CD4-positive, alpha-beta T cell (primary cell): ENCODE measurements at regions of chr1 and their contacts with region 1.

Region 1: DNA sequence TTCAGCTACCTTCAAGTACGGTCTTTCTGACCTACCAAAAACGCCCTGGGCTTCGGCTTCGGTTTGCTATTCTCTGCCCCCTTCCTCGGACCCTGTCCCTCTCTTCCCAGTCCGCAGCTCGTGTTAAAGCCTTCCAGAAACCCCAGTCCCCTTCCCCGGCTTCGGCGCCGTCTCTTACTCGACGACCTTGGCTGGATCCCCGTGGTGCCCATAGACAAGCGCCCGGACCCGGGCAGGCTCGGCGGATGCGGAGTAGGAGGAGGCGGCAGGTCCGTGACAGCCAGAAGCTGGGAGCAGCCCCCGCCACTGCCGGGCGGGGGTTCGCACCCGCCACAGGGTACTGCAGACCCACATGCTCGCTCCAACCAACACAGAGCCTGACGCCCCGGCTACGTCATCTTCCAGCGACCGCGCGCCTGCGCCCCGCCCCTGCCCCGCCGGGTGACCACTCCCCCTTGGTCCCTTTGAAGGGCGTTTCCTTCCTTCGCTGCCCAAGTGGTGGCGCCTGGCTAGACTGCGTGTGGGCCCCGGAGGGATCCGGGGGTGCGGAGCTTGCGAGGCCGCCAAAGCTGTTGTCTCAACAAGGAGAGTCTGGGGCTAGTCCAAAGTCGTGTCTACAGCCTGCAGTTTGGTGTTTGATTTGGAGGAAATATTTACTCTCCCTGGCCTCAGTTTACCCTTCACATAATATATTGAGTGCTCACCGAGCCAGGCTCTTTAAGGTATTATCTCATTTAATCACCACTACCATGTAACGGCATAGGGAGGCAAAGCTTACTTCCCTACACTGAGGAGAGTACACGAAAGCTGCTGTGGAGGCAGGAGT is at the start of gene MECR:
- DNase-seq: peak; percentile 88 to 97 (median 92)
- ATAC-seq: peak; percentile 94
- H3K4me3 ChIP-seq: peak within 1 kb of the TSS; percentile 96
- H3K4me3 Mint-ChIP-seq: peak within 1 kb of the TSS; percentile 94
- H3K27ac ChIP-seq: peak within 1 kb of the TSS; percentile 10 to 67
- H3K27ac Mint-ChIP-seq: peak within 1 kb of the TSS; percentile 92
- H3K4me1 ChIP-seq: peaks cover 17% of the 10 kb centered on the region
- H3K4me1 Mint-ChIP-seq: peaks cover 24% of the 10 kb centered on the region
- H3K27me3 ChIP-seq: peaks cover 0 to 6% of the 10 kb centered on the region in 2 experiments
- H3K27me3 Mint-ChIP-seq: peaks cover 13% of the 10 kb centered on the region
- CTCF ChIP-seq: no peak
- total RNA-seq, gene MECR: 5.5 to 6.6 TPM

Region 2: DNA sequence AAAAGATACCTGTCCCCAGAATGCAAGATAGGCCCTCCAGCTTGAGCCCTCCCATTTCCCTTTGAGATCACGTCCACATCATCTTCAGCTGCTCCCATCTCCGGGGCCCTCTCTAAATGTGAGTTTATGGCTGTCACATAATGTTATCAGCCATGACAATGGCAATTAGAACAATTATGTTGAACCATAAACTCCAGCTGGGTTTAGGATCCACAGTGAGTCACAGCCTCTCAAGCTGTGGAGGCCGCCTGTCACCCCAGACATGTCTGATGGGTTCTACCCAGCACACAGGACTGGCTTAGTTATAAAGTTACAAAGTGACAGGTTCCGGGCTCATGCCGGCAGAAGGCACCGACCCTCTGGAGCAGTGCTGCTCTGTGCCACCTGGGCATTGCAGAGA is 602.8 kb after region 1 on chr1:
- CTCF ChIA-PET with region 1: no interaction called
- POLR2A ChIA-PET with region 1: no interaction called
- intact Hi-C with region 1: no loop called
- DNase-seq: peak in 1 of 14 experiments; percentile 24
- ATAC-seq: no peak
- H3K4me3 ChIP-seq: no peak overlapping the region
- H3K4me3 Mint-ChIP-seq: no peak overlapping the region
- H3K27ac ChIP-seq: no peak overlapping the region
- H3K27ac Mint-ChIP-seq: no peak overlapping the region
- H3K4me1 ChIP-seq: no peaks in the 10 kb centered on the region
- H3K4me1 Mint-ChIP-seq: no peaks in the 10 kb centered on the region
- H3K27me3 ChIP-seq: no peaks in the 10 kb centered on the region
- H3K27me3 Mint-ChIP-seq: peaks cover 31% of the 10 kb centered on the region
- CTCF ChIP-seq: no peak

Region 3: GRCh38 chr1:30929135-30929889 is 1698.5 kb after region 1 on chr1:
- CTCF ChIA-PET with region 1: no interaction called
- POLR2A ChIA-PET with region 1: no interaction called
- intact Hi-C with region 1: loop called in 1 of 2 experiments (anchors 10 kb)
- DNase-seq: peak in 12 of 14 experiments; percentile 20 to 66 (median 35)
- ATAC-seq: peak; percentile 75
- H3K4me3 ChIP-seq: no peak overlapping the region
- H3K4me3 Mint-ChIP-seq: no peak overlapping the region
- H3K27ac ChIP-seq: no peak overlapping the region
- H3K27ac Mint-ChIP-seq: no peak overlapping the region
- H3K4me1 ChIP-seq: no peaks in the 10 kb centered on the region
- H3K4me1 Mint-ChIP-seq: no peaks in the 10 kb centered on the region
- H3K27me3 ChIP-seq: peaks cover 0 to 2% of the 10 kb centered on the region in 2 experiments
- H3K27me3 Mint-ChIP-seq: no peaks in the 10 kb centered on the region
- CTCF ChIP-seq: peak; percentile 78